Activated CD4-positive, alpha-beta T cell treated with anti-CD3 and anti-CD28 coated beads, Interleukin-2, amount 10 ng/mL, durations not matched to agents 24 days and 14 days (primary cell): ENCODE measurements at regions of chr3 and their contacts with region 1.

Region 1: GRCh38 chr3:108100906-108101660 is 10.3 kb upstream of the CD47 start:
- DNase-seq: peak; percentile 80
- H3K4me3 Mint-ChIP-seq: peak overlapping the region; percentile 49
- H3K27ac Mint-ChIP-seq: peak overlapping the region; percentile 81
- H3K4me1 Mint-ChIP-seq: peaks cover 40% of the 10 kb centered on the region
- H3K27me3 Mint-ChIP-seq: peaks cover 19% of the 10 kb centered on the region

Region 2: GRCh38 chr3:108118038-108118768 is 17.1 kb after region 1 on chr3:
- intact Hi-C with region 1: loop called (anchors 1 kb)
- DNase-seq: no peak
- H3K4me3 Mint-ChIP-seq: peak overlapping the region; percentile 11
- H3K27ac Mint-ChIP-seq: peak overlapping the region; percentile 79
- H3K4me1 Mint-ChIP-seq: peaks cover 32% of the 10 kb centered on the region
- H3K27me3 Mint-ChIP-seq: peaks cover 6% of the 10 kb centered on the region